Activated CD8-positive, alpha-beta T cell treated with anti-CD3 and anti-CD28 coated beads for 36 hours (primary cell): ENCODE measurements at regions of chr1 and their contacts with region 1.

Region 1: GRCh38 chr1:19385869-19386591 is 73.9 kb downstream of the SLC66A1 start:
- DNase-seq: no peak
- ATAC-seq: no peak
- H3K4me3 Mint-ChIP-seq: no peak overlapping the region
- H3K27ac Mint-ChIP-seq: no peak overlapping the region
- H3K4me1 Mint-ChIP-seq: peaks cover 34% of the 10 kb centered on the region
- H3K27me3 Mint-ChIP-seq: no peaks in the 10 kb centered on the region
- CTCF ChIP-seq: no peak

Region 2: GRCh38 chr1:19448491-19449439 is 62.7 kb after region 1 on chr1:
- CTCF ChIA-PET with region 1: no interaction called
- POLR2A ChIA-PET with region 1: no interaction called
- intact Hi-C with region 1: loop called (anchors 5 kb)
- DNase-seq: peak; percentile 71
- ATAC-seq: peak; percentile 85
- H3K4me3 Mint-ChIP-seq: peak overlapping the region; percentile 26
- H3K27ac Mint-ChIP-seq: peak overlapping the region; percentile 92
- H3K4me1 Mint-ChIP-seq: peaks cover 86% of the 10 kb centered on the region
- H3K27me3 Mint-ChIP-seq: no peaks in the 10 kb centered on the region
- CTCF ChIP-seq: no peak